ENCODE measurements at regions of chr3 and their contacts with region 1.

Region 1: DNA sequence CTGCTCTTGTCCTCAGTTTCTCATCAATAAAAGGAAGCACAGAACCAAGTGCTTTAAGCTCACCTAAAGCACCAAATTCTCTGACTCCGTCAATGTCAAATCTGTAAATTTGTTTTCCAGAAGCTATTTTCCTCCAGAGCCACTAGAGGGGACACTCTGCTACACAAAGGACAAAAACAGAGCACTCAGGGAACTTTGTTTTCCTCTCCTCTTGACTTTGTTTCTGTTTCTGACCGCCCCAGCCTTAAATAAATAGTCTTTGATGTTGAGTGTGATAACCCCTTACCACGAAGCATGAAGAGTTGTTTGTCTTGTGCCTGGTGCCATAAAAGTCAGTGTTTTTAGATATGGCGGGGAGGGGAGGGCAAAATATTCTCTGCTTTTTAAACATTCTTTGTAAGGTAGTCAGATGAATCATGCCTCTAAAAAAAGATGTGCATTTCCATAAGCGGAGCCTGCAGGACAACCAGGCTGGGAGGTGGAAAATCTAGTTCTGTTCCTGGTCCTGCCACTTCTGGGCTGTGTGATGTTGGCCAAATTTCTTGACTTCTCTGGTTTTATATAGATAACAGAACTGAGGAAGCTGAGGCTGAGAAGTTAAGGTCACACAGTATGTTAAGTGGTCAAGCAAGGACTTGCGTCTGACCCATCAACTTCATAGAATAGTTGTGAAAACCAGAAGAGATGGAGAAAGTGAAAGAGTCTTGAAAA is 7.3 kb upstream of the ZBTB38 start:
- DNase-seq: peak; percentile 83
- H3K4me3 Mint-ChIP-seq: peak overlapping the region; percentile 30
- H3K27ac Mint-ChIP-seq: peak overlapping the region; percentile 74
- H3K4me1 Mint-ChIP-seq: peaks cover 23% of the 10 kb centered on the region
- H3K27me3 Mint-ChIP-seq: no peaks in the 10 kb centered on the region
- CTCF ChIP-seq: peak; percentile 77

Region 2: DNA sequence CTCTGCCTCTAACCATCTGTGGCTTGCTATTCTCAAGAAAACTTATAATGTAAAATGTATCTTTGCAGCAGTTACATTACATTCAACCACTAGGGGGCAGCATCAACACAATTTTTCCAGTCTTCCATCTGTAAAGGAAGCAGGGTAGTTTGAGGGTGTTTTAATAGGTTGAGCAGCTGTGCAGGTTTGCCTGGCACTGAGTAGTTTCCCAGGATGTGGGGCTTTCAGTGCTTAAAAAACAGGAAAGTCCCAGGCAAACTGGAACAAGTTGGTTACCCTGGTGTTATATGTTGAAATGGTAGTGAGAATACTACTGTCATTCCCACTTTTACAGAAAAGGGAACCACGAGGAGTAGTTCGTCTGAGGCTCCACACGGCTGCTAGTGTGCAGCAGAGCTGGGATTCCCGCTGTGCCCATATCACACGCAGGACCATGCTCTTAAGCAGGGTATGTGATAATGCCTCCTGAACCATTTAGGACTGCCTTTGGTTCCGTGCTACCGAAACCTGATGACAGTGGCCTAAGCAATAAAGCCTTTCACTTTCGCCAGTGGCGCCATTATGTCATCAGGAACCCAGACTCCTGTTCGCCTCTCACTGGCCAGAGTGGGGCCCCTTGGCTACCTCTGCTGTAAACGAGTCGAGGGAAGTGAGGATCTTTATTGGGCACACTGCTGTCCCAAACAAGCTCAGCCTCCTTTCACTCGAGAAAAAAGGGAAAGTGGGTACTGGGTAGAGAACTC is 57.4 kb before region 1 on chr3:
- CTCF ChIA-PET with region 1: interaction called, 16 read pairs
- POLR2A ChIA-PET with region 1: interaction called, 10 read pairs
- intact Hi-C with region 1: no loop called
- DNase-seq: peak; percentile 79
- H3K4me3 Mint-ChIP-seq: no peak overlapping the region
- H3K27ac Mint-ChIP-seq: no peak overlapping the region
- H3K4me1 Mint-ChIP-seq: peaks cover 9% of the 10 kb centered on the region
- H3K27me3 Mint-ChIP-seq: no peaks in the 10 kb centered on the region
- CTCF ChIP-seq: peak; percentile 62

Region 3: GRCh38 chr3:141346418-141346817 is 14.6 kb before region 1 on chr3:
- CTCF ChIA-PET with region 1: interaction called, 13 read pairs
- POLR2A ChIA-PET with region 1: interaction called, 3 read pairs
- intact Hi-C with region 1: no loop called
- DNase-seq: no peak
- H3K4me3 Mint-ChIP-seq: no peak overlapping the region
- H3K27ac Mint-ChIP-seq: no peak overlapping the region
- H3K4me1 Mint-ChIP-seq: no peaks in the 10 kb centered on the region
- H3K27me3 Mint-ChIP-seq: no peaks in the 10 kb centered on the region
- CTCF ChIP-seq: no peak

Region 4: GRCh38 chr3:141412087-141412935 is 51.3 kb after region 1 on chr3:
- CTCF ChIA-PET with region 1: interaction called, 17 read pairs
- POLR2A ChIA-PET with region 1: interaction called, 349 read pairs
- intact Hi-C with region 1: no loop called
- DNase-seq: peak; percentile 89
- H3K4me3 Mint-ChIP-seq: peak overlapping the region; percentile 58
- H3K27ac Mint-ChIP-seq: peak overlapping the region; percentile 95
- H3K4me1 Mint-ChIP-seq: peaks cover 47% of the 10 kb centered on the region
- H3K27me3 Mint-ChIP-seq: no peaks in the 10 kb centered on the region
- CTCF ChIP-seq: no peak

Region 5: DNA sequence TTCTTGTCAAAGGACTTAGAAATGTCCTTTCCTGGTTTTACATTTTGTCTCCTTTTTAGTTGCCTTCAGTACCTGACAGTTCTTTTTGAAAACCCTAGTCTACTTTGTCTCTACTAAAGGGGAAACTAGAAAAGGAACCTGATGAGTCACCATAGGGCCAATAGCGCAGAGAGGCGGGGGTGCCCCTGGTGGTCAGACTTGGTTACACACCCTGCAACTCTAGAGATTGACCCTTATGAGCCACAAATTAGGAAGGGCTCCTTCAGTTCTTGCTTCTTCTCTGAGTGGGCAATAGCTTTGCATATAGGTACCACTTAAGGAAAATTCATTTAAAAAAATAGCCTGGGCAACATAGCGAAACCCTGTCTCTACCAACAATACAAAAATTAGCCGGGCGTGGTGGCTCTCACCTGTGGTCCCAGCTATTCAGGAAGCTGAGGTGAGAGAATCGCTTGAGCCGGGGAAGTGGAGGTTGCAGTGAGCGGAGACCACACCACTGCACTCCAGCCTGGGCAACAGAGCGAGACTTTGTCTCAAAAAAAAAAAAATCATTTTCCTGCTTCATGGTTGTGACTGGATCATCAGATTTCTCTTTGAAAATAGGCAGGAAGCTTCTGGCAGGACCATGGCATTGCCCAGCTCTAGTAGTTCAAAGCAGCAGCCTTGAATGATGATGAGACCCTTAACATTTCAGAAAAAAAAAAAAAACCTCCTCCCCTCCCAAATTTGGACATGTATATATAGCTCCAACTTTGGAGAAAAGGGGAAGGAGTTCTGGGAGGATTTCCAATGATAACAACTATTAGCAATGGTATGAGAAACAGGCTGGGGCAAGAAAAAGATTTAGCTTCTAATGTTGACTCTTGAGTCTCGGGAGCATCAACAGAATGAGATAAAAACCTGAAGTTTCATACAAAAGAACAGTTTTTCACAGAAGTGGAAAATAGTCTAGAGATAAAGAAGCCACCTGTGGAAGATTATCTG is 80.6 kb after region 1 on chr3:
- CTCF ChIA-PET with region 1: interaction called, 85 read pairs
- POLR2A ChIA-PET with region 1: interaction called, 43 read pairs
- intact Hi-C with region 1: loop called (anchors 1 kb)
- DNase-seq: peak; percentile 77
- H3K4me3 Mint-ChIP-seq: no peak overlapping the region
- H3K27ac Mint-ChIP-seq: peak overlapping the region; percentile 64
- H3K4me1 Mint-ChIP-seq: peaks cover 18% of the 10 kb centered on the region
- H3K27me3 Mint-ChIP-seq: no peaks in the 10 kb centered on the region
- CTCF ChIP-seq: peak; percentile 84

Region 6: GRCh38 chr3:141465221-141465620 is 104.2 kb after region 1 on chr3:
- CTCF ChIA-PET with region 1: interaction called, 26 read pairs
- POLR2A ChIA-PET with region 1: no interaction called
- intact Hi-C with region 1: no loop called
- DNase-seq: no peak
- H3K4me3 Mint-ChIP-seq: no peak overlapping the region
- H3K27ac Mint-ChIP-seq: no peak overlapping the region
- H3K4me1 Mint-ChIP-seq: no peaks in the 10 kb centered on the region
- H3K27me3 Mint-ChIP-seq: no peaks in the 10 kb centered on the region
- CTCF ChIP-seq: peak; percentile 8